GM12878 (cell line): ENCODE measurements at regions of chr13 and their contacts with region 1.

Region 1: GRCh38 chr13:52809310-52809769 is 39.1 kb downstream of the PCDH8 start:
- DNase-seq: peak; percentile 35
- ATAC-seq: peak; percentile 89
- H3K4me3 ChIP-seq: no peak overlapping the region
- H3K27ac ChIP-seq: no peak overlapping the region
- H3K4me1 ChIP-seq: peaks cover 4% of the 10 kb centered on the region; the same call in 1 of the 2 replicates
- H3K27me3 ChIP-seq: no peaks in the 10 kb centered on the region
- CTCF ChIP-seq: peak; percentile 75 to 86 (median 86)
- EP300 ChIP-seq: no peak
- POLR2A ChIP-seq: no peak
- RAD21 ChIP-seq: peak; percentile 86

Region 2: GRCh38 chr13:51342706-51343105 is 1466.6 kb before region 1 on chr13:
- CTCF ChIA-PET with region 1: no interaction called
- POLR2A ChIA-PET with region 1: no interaction called
- RAD21 ChIA-PET with region 1: no interaction called
- SMC1A ChIA-PET with region 1: no interaction called
- in situ Hi-C with region 1: no loop called
- intact Hi-C with region 1: no loop called
- DNase-seq: no peak
- ATAC-seq: no peak
- H3K4me3 ChIP-seq: no peak overlapping the region
- H3K27ac ChIP-seq: no peak overlapping the region
- H3K4me1 ChIP-seq: 0 out of 2 replicates have a peak, but pooled peaks cover 4% of the 10 kb centered on the region
- H3K27me3 ChIP-seq: no peaks in the 10 kb centered on the region
- CTCF ChIP-seq: no peak
- EP300 ChIP-seq: no peak
- POLR2A ChIP-seq: no peak
- RAD21 ChIP-seq: no peak

Region 3: DNA sequence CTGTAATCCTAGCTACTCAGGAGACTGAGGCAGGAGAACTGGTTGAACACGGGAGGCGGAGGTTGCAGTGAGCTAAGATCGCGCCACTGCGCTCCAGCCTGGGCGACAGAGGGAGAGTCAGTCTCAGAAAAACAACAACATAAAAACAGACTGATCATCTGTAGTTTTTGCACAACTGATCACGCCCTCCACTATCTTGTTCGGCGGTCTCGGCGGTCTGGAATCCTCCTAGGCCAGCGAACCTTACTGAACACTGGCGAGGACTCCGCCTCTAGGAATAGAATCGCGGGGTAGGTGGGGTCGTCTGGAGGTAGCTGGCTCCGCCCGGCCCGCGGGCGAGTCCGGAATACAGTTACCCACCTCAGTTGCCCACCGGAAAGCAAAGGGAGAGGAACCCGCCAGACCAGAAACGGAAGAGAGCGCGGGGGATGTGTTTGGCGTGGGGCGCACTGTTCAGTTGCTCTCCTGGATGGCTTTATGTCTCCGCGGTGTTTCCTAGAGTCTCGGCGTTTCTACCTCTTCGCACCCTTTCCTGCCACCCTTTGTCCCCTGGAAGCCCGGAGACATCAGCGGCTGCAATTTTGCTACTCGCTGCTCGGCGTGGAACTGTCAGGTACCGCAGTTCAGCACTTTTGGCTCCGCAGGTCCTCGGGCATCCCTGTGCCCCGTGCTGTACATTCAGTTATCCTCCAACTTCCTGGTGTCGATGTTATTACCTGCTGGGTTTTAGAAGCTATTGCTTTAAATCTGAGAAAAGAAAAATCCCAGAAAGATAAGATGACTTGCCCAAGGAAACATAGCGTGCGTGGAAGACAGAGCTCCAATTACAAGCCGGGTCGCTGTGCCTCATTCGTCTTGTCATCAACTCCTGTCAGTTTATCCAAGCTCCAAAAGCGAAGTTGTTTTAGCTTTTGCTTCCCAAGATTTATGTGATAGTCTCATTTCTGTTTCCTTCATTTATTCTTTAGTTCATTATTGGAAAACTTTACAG is 192.0 kb before region 1 on chr13:
- CTCF ChIA-PET with region 1: interaction called, 16 read pairs
- POLR2A ChIA-PET with region 1: interaction called, 4 read pairs
- RAD21 ChIA-PET with region 1: interaction called, 10 read pairs
- SMC1A ChIA-PET with region 1: interaction called, 24 read pairs
- in situ Hi-C with region 1: no loop called
- intact Hi-C with region 1: loop called (anchors 2 kb)
- DNase-seq: peak; percentile 56
- ATAC-seq: peak; percentile 96
- H3K4me3 ChIP-seq: peak overlapping the region; percentile 98
- H3K27ac ChIP-seq: peak overlapping the region; percentile 58
- H3K4me1 ChIP-seq: peaks cover 6% of the 10 kb centered on the region; the same call in 1 of the 2 replicates
- H3K27me3 ChIP-seq: no peaks in the 10 kb centered on the region
- CTCF ChIP-seq: no peak
- EP300 ChIP-seq: no peak; a peak in 1 of 4 replicates
- POLR2A ChIP-seq: peak; percentile 86
- RAD21 ChIP-seq: 0 out of 2 replicates have a peak, but pooled peaks have one; percentile 9

Region 4: DNA sequence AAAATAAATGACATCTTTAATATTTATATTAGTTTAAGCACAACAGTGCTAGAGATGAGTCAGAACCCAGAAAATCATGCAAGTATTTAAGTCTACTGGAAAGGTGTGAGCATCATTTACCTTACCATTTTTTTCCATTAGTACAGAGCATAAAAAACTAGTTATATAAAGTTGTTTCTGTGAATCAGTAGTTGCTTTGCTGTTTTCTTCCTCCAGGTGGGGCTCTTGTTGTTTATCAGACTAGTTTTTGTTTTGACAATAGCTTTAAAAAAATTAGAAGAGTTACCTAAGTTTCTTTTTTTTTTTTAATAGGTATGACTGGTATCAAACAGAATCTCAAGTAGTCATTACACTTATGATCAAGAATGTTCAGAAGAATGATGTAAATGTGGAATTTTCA is 144.0 kb before region 1 on chr13:
- CTCF ChIA-PET with region 1: interaction called, 179 read pairs
- POLR2A ChIA-PET with region 1: interaction called, 8 read pairs
- RAD21 ChIA-PET with region 1: interaction called, 147 read pairs
- SMC1A ChIA-PET with region 1: interaction called, 129 read pairs
- in situ Hi-C with region 1: loop called (anchors 5 kb)
- intact Hi-C with region 1: loop called (anchors 1 kb)
- DNase-seq: no peak
- ATAC-seq: peak; percentile 34
- H3K4me3 ChIP-seq: no peak overlapping the region
- H3K27ac ChIP-seq: no peak overlapping the region
- H3K4me1 ChIP-seq: peaks cover 3% of the 10 kb centered on the region; the same call in 1 of the 2 replicates
- H3K27me3 ChIP-seq: no peaks in the 10 kb centered on the region
- CTCF ChIP-seq: peak; percentile 38 to 53 (median 52); a peak in 4 of 6 replicates
- EP300 ChIP-seq: no peak
- POLR2A ChIP-seq: no peak
- RAD21 ChIP-seq: peak; percentile 60

Region 5: DNA sequence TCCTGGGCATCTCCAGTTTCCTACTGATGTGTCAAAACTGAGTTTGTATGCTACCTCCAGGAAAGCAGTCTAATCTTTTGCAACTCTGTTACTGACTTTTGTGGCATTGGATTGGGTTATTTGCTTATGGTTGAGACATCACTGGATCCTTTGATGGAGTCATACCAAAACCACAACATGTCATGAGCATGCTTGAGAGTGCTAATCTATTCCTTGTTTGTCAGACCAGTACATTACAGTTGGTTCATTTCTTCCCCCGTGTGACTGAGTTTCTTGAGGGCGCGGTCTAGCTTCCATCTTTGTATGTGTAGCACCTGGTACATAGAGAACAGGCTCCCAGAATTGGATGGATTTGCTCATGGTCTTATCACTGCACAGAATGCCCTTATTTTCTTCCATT is 113.5 kb before region 1 on chr13:
- CTCF ChIA-PET with region 1: interaction called, 27 read pairs
- POLR2A ChIA-PET with region 1: no interaction called
- RAD21 ChIA-PET with region 1: interaction called, 12 read pairs
- SMC1A ChIA-PET with region 1: interaction called, 42 read pairs
- in situ Hi-C with region 1: no loop called
- intact Hi-C with region 1: no loop called
- DNase-seq: peak; percentile 3
- ATAC-seq: peak; percentile 90
- H3K4me3 ChIP-seq: no peak overlapping the region
- H3K27ac ChIP-seq: no peak overlapping the region
- H3K4me1 ChIP-seq: no peaks in the 10 kb centered on the region
- H3K27me3 ChIP-seq: no peaks in the 10 kb centered on the region
- CTCF ChIP-seq: no peak
- EP300 ChIP-seq: no peak
- POLR2A ChIP-seq: no peak
- RAD21 ChIP-seq: no peak

Region 6: GRCh38 chr13:52723181-52723580 is 86.2 kb before region 1 on chr13:
- CTCF ChIA-PET with region 1: interaction called, 82 read pairs
- POLR2A ChIA-PET with region 1: interaction called, 39 read pairs
- RAD21 ChIA-PET with region 1: interaction called, 161 read pairs
- SMC1A ChIA-PET with region 1: interaction called, 137 read pairs
- in situ Hi-C with region 1: no loop called
- intact Hi-C with region 1: loop called (anchors 2 kb)
- DNase-seq: no peak
- ATAC-seq: no peak
- H3K4me3 ChIP-seq: no peak overlapping the region
- H3K27ac ChIP-seq: no peak overlapping the region
- H3K4me1 ChIP-seq: no peaks in the 10 kb centered on the region
- H3K27me3 ChIP-seq: no peaks in the 10 kb centered on the region
- CTCF ChIP-seq: no peak
- EP300 ChIP-seq: no peak
- POLR2A ChIP-seq: no peak
- RAD21 ChIP-seq: no peak

Region 7: DNA sequence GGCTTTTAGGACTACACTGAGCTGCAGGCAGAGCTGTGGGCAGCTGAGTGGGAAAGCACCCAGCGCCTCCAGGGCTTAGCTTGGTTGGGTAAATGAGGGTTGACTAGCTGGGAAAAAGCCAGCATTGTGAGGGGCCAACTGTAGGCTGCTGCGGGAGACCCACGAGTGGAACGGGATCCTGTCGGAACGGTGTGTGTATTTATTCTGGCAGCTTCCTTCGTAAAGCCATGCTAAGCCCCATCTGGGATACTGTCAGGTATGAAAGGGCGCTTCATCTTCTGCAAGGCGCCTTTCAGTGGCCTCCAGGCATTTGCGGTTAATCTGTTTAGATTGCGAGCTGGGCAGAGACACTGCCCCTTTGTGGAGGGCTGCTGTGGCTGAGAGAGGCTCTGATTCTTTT is 30.2 kb before region 1 on chr13:
- CTCF ChIA-PET with region 1: interaction called, 14 read pairs
- POLR2A ChIA-PET with region 1: interaction called, 5 read pairs
- RAD21 ChIA-PET with region 1: interaction called, 13 read pairs
- SMC1A ChIA-PET with region 1: interaction called, 15 read pairs
- in situ Hi-C with region 1: no loop called
- intact Hi-C with region 1: no loop called
- DNase-seq: no peak
- ATAC-seq: peak; percentile 60
- H3K4me3 ChIP-seq: no peak overlapping the region
- H3K27ac ChIP-seq: no peak overlapping the region
- H3K4me1 ChIP-seq: no peaks in the 10 kb centered on the region
- H3K27me3 ChIP-seq: peaks cover 0 to 5% of the 10 kb centered on the region in 2 experiments; a peak in 1 of 4 replicates
- CTCF ChIP-seq: no peak
- EP300 ChIP-seq: no peak
- POLR2A ChIP-seq: no peak
- RAD21 ChIP-seq: no peak

Region 8: DNA sequence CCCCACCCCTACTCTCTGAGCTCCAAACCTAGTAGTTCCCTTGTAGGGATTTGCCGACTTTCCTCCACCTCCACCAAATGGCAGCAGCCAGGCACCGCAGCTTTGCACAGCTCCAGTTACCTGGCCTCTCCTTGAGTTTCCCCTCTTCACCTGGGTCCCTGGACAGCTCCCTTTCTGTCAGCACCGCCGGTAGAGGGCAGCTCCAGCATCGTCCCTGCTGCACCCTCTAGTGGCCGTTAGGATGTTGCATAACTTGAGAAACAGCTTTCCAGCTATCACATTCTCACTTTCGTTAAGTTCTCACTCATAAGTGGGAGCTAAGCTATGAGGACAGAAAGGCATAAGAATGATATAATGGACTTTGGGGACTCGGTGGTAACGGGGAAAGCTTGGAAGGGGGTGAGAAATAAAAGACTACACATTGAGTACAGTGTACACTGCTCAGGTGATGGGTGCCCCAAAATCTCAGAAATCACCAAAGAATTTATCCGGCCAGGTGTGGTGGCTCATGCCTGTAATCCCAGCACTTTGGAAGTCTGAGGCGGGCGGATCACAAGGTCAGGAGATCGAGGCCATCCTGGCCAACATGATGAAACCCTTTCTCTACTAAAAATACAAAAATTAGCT is 158.8 kb after region 1 on chr13:
- CTCF ChIA-PET with region 1: interaction called, 25 read pairs
- POLR2A ChIA-PET with region 1: no interaction called
- RAD21 ChIA-PET with region 1: interaction called, 24 read pairs
- SMC1A ChIA-PET with region 1: interaction called, 22 read pairs
- in situ Hi-C with region 1: no loop called
- intact Hi-C with region 1: no loop called
- DNase-seq: peak; percentile 16
- ATAC-seq: peak; percentile 100
- H3K4me3 ChIP-seq: no peak overlapping the region
- H3K27ac ChIP-seq: no peak overlapping the region
- H3K4me1 ChIP-seq: no peaks in the 10 kb centered on the region
- H3K27me3 ChIP-seq: no peaks in the 10 kb centered on the region; a peak in 1 of 4 replicates
- CTCF ChIP-seq: peak; percentile 98 to 100 (median 99)
- EP300 ChIP-seq: no peak
- POLR2A ChIP-seq: no peak
- RAD21 ChIP-seq: peak; percentile 91

Region 9: DNA sequence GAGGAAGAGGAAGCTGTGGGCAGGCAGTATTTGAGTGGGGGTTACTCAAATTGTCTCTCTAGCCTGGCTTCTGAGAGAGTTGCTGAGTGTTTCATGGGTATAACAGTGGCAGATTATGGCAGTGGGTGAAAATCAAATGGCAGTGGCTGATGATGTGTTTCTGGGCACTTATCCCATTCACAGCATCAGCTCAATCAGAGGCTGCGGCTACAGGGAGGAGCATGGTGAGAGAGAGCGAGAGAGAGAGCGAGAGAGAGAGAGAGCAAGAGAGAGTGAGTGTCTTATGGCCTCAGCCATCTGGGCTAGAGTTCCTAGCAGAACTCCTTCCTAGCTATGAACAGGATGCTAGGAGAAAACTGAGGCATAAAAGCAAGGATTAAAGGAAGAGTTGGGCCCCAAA is 398.2 kb after region 1 on chr13:
- CTCF ChIA-PET with region 1: no interaction called
- POLR2A ChIA-PET with region 1: no interaction called
- RAD21 ChIA-PET with region 1: no interaction called
- SMC1A ChIA-PET with region 1: no interaction called
- in situ Hi-C with region 1: no loop called
- intact Hi-C with region 1: no loop called
- DNase-seq: no peak
- ATAC-seq: no peak
- H3K4me3 ChIP-seq: no peak overlapping the region
- H3K27ac ChIP-seq: no peak overlapping the region
- H3K4me1 ChIP-seq: no peaks in the 10 kb centered on the region
- H3K27me3 ChIP-seq: no peaks in the 10 kb centered on the region
- CTCF ChIP-seq: no peak
- EP300 ChIP-seq: no peak
- POLR2A ChIP-seq: no peak
- RAD21 ChIP-seq: no peak